ENCODE measurements at regions of chrX and their contacts with region 1.

Region 1: GRCh38 chrX:39814391-39814790 is 283.4 kb downstream of the BCOR start:
- DNase-seq: no peak
- ATAC-seq: no peak
- H3K4me3 ChIP-seq: no peak overlapping the region
- H3K27ac ChIP-seq: no peak overlapping the region
- H3K4me1 ChIP-seq: no peaks in the 10 kb centered on the region
- H3K27me3 ChIP-seq: no peaks in the 10 kb centered on the region

Region 2: DNA sequence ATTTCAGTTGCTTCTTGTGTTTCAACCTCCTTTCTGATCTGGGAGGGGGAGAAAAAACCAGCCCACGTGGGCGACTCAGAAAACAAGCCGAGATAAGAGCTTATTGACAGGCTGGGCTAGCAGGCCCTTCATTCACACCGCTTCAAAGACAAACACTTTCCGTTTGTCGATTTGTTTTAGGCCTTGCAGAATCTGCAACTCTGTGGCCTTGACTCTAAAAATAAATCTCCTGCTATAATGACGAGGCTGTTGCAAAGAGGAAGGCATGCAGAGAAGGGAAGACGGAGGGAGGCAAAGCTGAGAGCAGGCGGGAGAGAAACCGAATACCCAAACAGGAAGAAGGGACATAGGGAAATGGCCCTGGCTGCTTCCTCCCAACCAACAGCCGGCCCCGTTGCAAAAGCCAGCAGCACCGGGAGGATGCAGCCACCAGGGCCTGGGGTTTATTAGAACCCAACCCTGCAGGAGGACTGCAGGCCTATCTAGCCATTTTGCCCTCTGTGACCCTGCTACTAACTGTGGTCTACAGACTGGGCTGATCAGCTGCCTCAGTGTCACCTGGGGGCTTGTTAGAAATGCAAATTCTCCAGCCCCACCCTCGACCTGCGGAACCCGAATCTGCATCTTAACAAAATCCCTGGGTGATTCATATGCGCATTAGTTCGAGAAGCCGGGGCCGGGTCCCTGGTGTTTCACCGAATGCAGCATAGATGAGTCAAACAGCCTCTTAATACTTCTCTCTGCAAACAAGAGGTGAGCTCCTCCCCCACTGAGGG is 42.1 kb before region 1 on chrX:
- intact Hi-C with region 1: loop called in 1 of 2 experiments (anchors 5 kb)
- DNase-seq: peak in 1 of 2 donors; percentile 58
- ATAC-seq: no peak
- H3K4me3 ChIP-seq: no peak overlapping the region
- H3K27ac ChIP-seq: peak overlapping the region in 1 of 2 donors; percentile 47
- H3K4me1 ChIP-seq: no peaks in the 10 kb centered on the region
- H3K27me3 ChIP-seq: no peaks in the 10 kb centered on the region

Region 3: DNA sequence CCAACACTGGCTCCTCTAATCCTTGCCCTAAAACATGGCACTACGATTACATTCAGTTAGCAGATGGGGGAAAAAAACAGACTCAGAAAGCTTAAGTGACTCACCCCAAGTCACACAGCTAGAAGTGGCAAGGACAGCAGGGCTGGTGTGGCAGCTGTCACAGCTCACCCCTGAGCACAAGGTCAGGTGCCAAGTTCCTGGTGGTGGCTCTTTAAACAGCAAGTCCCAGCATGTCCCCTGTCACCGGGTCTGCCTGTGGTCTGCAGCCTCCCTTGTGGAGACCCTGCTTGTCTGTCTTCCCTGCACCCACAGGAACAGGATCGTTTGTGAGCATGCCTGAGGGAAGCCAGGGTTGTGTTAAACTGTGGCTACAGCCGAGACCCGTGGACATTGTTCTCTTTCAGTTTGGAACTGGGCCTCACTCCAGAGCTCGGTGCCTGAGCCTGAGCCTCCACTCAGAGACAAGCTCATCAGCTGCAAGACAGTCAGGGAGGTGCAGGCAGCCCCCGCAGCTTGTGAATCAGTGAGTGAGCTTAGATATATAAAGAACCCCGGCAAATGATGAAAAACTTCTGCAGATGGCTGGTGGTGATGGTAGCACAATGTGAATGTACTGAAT is 22.5 kb after region 1 on chrX:
- intact Hi-C with region 1: no loop called
- DNase-seq: no peak
- ATAC-seq: no peak
- H3K4me3 ChIP-seq: no peak overlapping the region
- H3K27ac ChIP-seq: no peak overlapping the region
- H3K4me1 ChIP-seq: no peaks in the 10 kb centered on the region
- H3K27me3 ChIP-seq: no peaks in the 10 kb centered on the region

Region 4: DNA sequence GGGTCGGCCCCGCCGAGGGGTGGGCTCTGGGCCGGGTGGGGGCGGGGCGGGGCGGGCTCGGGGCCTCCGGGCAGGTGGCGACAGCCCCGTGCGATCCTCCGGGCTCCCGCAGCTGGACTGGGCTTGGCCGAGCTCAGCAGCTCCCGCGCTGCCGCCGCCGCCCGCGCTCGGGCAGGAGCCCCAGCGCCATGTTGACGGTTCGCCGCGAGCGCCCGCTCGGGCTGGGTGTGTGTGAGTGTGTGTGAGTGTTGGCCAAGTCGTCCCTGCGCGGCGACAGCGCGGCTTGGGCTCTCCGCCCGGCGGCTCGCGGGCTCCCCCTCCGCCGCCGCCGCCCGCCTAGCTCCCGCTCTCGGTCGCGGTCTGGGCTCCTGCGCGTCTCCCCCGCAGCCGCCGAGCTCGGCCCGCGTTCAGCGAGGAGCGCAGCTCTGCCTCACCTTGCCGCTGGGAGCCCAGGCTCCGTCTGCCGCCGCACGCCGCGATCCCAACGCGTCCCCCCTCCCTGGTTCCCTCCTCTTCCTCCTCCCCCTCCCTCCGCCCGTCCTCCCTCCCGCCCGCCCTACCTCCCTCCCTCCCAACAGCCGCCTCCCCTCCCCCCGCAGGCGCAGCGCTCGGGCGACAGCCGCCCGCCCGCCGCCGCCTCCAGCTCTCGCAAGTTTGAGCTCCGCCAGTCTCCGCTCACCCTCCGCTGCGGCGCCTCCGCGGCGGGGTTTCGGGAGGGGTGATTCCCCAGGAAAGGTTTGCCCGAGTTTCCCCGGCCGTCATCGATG is 283.3 kb after region 1 on chrX and contains the start of gene BCOR:
- intact Hi-C with region 1: loop called in 1 of 2 experiments (anchors 5 kb)
- DNase-seq: peak; percentile 86 to 91
- ATAC-seq: peak; percentile 58
- H3K4me3 ChIP-seq: peak within 1 kb of the TSS; percentile 55 to 86
- H3K27ac ChIP-seq: peak within 1 kb of the TSS; percentile 30 to 87
- H3K4me1 ChIP-seq: no peaks in the 10 kb centered on the region
- H3K27me3 ChIP-seq: peaks cover 0 to 2% of the 10 kb centered on the region in 2 donors
- total RNA-seq, gene BCOR: 22.6 to 46.7 TPM

Region 5: DNA sequence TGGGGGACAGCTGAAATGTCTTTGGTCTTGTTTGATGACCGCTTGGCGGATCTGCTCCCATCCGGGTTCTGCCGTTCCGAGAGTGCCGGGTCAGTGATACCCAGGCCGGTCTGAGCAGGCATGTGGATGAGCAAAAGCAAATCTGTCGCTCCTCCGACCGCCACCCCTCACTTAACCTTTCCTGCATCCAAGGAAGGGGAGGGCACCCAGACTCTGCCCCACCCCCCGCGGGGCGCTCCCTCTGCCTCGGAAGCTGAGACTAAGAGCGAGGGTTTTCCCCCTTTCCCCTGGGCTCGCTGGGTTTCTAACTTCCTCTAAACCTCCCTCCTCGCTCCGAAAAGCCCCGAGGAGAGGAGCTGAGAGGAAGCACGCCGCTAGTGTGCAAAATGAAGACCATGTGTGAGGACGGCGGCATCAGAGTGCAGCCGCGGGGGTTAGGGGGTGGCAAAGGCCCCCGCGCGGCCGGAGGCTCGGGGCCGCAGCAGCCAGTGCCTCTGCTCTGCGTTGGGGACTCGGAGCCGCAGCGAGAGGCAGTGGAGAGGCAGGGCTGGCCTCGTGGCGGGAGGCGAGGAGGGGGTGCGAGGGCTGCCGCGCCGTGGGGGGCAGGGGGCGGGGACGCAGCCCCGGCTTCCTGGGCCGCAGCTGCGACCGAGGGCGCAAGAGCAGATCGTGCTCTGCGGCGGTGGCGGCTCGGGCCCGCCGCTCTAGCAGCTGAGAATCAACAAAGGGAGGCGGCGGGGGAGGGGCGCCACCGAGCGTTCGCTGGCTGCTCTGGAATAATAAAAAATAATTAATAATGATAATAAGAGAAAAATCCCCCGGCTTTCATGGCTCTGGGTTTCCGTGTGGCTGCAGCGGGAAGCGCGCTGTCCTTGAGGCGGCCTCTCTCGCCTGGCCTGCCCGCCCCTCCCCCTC is 339.2 kb after region 1 on chrX:
- intact Hi-C with region 1: loop called in 1 of 2 experiments (anchors 10 kb)
- DNase-seq: peak; percentile 71 to 82
- ATAC-seq: peak; percentile 15
- H3K4me3 ChIP-seq: peak overlapping the region; percentile 31 to 38
- H3K27ac ChIP-seq: no peak overlapping the region
- H3K4me1 ChIP-seq: no peaks in the 10 kb centered on the region
- H3K27me3 ChIP-seq: peaks cover 0 to 2% of the 10 kb centered on the region in 2 donors

Region 6: DNA sequence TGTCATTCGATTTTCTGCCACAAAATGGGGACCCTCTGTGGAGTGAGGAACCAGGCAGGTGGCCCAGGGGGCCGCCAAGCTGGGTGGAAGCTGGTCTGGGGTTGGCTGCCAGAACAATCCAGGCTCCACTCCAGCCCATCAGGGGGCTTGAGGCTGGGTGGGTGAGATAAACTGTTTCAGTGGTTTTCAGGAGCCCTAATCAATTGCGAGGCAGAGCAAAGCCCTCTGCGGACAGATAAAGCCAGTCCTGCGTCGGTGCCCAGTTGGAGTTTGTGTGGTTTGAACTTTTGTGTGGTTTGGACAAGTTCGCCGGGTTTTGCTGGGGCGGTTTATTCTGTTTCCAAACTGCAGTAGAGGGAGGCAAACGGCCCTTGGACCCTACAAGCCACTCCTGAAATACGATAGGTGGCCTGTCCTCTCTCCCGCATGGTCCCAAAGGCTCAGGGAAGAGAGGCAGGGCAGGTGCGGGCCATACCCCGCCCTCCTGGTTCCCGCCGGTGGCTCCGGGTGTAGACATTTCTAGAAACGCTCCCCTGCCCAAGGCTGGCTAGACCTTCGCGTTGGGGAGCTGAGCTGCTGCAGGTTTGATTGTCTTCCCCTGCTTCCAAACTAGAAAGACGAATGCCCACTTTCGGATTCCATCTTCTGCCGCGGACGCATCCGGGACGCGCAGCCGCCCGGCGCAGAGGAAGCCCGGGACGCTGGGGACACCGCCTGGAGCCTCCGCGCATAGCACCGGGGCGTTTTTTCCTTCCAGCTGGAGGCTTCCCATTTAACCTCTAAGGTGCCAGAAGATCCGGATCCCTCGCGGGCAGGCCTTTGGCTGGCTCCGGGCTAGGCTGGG is 452.3 kb after region 1 on chrX:
- intact Hi-C with region 1: loop called in 1 of 2 experiments (anchors 10 kb)
- DNase-seq: peak; percentile 75 to 88
- ATAC-seq: peak; percentile 88
- H3K4me3 ChIP-seq: peak overlapping the region in 1 of 2 donors; percentile 75
- H3K27ac ChIP-seq: peak overlapping the region; percentile 2 to 87
- H3K4me1 ChIP-seq: no peaks in the 10 kb centered on the region
- H3K27me3 ChIP-seq: no peaks in the 10 kb centered on the region

Measured in aorta (tissue), 5 donors.